OCI-LY7 (cell line): ENCODE measurements at regions of chr5 and their contacts with region 1.

Region 1: GRCh38 chr5:140143521-140144258 is 18.0 kb downstream of the IGIP start:
- DNase-seq: no peak
- H3K4me3 ChIP-seq: no peak overlapping the region
- H3K27ac ChIP-seq: no peak overlapping the region
- H3K4me1 ChIP-seq: no peaks in the 10 kb centered on the region
- CTCF ChIP-seq: no peak

Region 2: DNA sequence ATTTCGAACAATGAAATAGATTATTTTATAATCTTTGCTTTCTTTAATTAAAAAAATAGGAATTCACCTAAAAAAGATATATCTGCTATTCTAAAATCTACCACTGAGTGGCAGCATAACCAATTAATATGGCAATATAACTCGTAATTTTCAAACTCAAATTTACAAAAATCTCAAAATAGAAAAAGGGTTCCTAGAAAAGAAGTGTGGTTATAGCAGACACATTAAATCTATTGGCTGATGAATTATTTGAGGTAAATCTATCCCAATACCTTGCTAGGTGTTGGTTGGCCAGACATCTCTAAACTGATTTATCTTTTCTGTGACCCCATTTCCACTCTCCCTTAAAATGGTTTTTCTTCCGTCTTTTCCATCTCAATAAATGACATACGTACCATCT is 70.4 kb before region 1 on chr5:
- CTCF ChIA-PET with region 1: no interaction called
- POLR2A ChIA-PET with region 1: no interaction called
- intact Hi-C with region 1: loop called (anchors 1 kb)
- DNase-seq: peak; percentile 41
- H3K4me3 ChIP-seq: no peak overlapping the region
- H3K27ac ChIP-seq: no peak overlapping the region
- H3K4me1 ChIP-seq: no peaks in the 10 kb centered on the region
- CTCF ChIP-seq: peak; percentile 96